H1 (cell line): ENCODE measurements at regions of chr14 and their contacts with region 1.

Region 1: DNA sequence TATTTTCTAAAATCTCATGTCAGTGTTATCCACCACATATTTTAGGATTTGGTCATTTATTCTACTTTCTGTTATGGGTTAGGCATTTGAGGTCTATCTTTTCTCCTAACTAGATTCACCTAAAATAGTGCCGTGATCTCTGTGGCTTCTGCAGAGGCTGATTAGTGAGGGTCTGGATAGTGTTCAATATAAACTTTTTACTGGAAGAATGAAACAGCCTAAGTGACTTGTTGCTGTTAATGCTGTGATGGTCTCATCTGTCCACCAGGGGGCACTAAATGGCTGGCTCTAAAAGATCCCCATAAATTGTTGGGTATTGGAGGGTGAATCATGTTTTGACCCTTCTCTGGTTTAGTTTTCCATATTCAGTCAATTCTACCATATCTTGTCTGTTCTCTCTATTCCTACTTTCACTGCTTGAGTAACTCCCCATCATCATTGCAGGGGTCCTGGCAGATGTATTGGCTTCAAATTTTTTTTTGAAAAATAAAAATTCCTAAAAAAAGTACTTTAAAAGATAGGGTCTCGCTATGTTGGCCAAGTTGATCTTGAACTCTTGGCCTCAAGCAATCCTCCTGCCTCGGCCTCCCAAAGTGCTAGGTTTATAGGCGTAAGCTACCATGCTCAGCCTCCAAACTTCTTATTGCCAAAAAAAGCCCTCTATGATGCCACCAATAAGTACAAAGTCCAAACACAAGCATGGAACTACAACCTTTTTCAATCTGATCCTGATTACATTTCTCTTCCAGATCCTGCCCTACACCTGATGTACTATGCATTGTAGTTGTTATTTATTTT is 6.9 kb downstream of the PABPN1 start:
- DNase-seq: peak in 1 of 2 experiments; percentile 69
- H3K4me3 ChIP-seq: no peak overlapping the region
- H3K27ac ChIP-seq: no peak overlapping the region
- H3K4me1 ChIP-seq: no peaks in the 10 kb centered on the region
- H3K27me3 ChIP-seq: no peaks in the 10 kb centered on the region
- CTCF ChIP-seq: peak in 2 of 3 experiments; percentile 82 to 89; a peak in 3 of 4 replicates
- EP300 ChIP-seq: no peak
- POLR2A ChIP-seq: no peak; a peak in 1 of 3 replicates
- RAD21 ChIP-seq: peak; percentile 90 to 91

Region 2: GRCh38 chr14:22715186-22715812 is 612.8 kb before region 1 on chr14:
- CTCF ChIA-PET with region 1: no interaction called
- POLR2A ChIA-PET with region 1: no interaction called
- DNase-seq: peak in 1 of 2 experiments; percentile 49
- H3K4me3 ChIP-seq: no peak overlapping the region
- H3K27ac ChIP-seq: no peak overlapping the region
- H3K4me1 ChIP-seq: no peaks in the 10 kb centered on the region
- H3K27me3 ChIP-seq: no peaks in the 10 kb centered on the region
- CTCF ChIP-seq: no peak
- EP300 ChIP-seq: no peak
- POLR2A ChIP-seq: no peak
- RAD21 ChIP-seq: no peak

Region 3: DNA sequence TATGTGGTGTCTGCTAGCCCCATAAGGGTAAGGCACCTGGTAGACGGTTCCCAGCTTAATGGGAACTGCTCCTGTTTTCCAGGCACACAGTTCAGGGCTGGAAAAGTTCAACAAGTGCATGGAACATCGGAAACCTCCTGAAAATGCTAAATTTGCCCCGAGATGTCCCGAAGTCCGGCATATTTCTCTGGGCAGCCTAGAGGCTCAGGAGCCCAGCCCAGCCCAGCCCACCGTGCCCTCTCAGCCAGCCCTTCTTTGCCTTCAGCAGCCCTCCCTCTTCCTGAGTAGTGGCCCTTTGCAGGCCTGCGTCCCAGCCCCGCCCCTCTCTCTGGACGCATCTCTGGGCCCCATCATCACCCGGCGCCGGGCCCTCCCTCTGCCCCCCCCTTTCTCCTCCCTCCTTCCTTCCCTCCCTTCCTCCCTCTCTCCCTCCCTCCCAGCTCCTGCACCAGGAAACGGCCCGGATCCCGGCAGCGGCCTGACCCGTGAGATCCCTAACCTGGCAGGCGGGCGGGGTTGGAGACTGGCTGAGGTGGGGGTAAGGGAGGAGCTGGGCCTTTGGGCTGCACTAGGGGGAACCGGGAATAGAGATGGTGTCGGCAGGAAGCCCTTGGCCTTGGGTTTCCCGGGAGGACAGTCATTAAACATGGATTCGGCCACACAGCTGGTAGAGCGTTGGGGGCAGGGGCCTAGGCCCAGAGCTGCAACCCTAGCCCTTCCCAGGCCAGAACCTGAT is 21.6 kb before region 1 on chr14 and contains the start of gene BCL2L2:
- CTCF ChIA-PET with region 1: interaction called, 26 read pairs
- POLR2A ChIA-PET with region 1: interaction called, 48 read pairs
- DNase-seq: peak; percentile 70 to 90
- H3K4me3 ChIP-seq: peak within 1 kb of the TSS; percentile 57 to 90 (median 83)
- H3K27ac ChIP-seq: peak within 1 kb of the TSS; percentile 83; the same call in 1 of the 2 replicates
- H3K4me1 ChIP-seq: peaks cover 0 to 3% (median 1%) of the 10 kb centered on the region in 4 experiments; a peak in 4 of 7 replicates
- H3K27me3 ChIP-seq: peaks cover 0 to 12% (median 5%) of the 10 kb centered on the region in 4 experiments; a peak in 4 of 7 replicates
- CTCF ChIP-seq: no peak
- EP300 ChIP-seq: peak in 1 of 2 experiments; percentile 79; a peak in 1 of 3 replicates
- POLR2A ChIP-seq: peak; percentile 85 to 91
- RAD21 ChIP-seq: 0 out of 4 replicates have a peak, but pooled peaks of 1 of the 2 experiments have one; percentile 9
- total RNA-seq, gene BCL2L2: 13.3 and 13.8 TPM in 2 replicates

Region 4: DNA sequence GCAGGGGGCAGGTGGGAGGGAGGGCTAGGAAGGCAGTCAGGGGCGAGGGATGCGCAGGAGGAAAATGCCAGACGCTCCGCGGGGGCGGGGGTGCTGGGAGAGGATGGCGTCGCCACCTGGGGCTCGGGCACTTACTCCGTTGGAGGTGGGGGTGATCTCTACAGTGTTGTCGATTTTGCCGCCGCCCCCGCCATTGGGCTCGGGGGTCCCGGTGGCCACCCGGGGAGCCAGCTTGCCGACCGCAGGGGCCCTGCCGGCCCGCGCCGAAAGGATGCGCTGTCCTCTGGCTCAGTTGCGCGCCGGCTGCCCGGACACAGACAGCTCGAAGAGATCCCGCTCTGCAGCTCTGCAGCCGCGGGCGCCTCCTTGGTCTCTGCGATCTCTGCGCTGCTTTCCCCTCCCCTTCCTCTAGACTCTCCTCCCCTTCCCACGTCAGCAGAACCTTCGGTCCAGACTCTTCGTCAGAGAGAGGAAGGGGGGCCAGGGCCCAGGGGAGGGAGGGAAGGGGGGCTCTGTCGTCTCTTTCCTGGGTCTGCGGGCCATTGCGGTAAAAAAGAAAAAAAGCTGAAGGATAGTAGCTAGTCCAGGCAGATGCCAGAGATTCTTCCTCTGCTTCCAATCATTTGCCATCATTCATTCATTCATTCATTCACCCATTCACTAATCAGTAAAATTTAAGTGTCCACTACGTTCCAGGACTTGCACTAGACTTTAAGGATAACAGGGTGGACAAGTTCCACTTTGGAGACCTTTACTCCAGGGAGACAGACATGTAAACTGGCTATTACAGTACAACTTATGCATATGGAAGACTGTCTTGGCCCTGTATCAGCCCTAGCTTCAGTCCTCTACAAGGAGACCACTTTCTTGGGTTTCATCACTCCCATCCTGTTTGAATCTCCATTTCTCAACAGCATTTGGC is 24.6 kb after region 1 on chr14 and contains the start of gene SLC22A17:
- CTCF ChIA-PET with region 1: interaction called, 31 read pairs
- POLR2A ChIA-PET with region 1: interaction called, 25 read pairs
- DNase-seq: peak in 1 of 2 experiments; percentile 86
- H3K4me3 ChIP-seq: peak within 1 kb of the TSS; percentile 37 to 84 (median 73)
- H3K27ac ChIP-seq: 0 out of 2 replicates have a peak within 1 kb of the TSS, but pooled peaks have one; percentile 8
- H3K4me1 ChIP-seq: peaks cover 0 to 3% (median 2%) of the 10 kb centered on the region in 4 experiments; a peak in 4 of 7 replicates
- H3K27me3 ChIP-seq: peaks cover 0 to 14% (median 10%) of the 10 kb centered on the region in 4 experiments; a peak in 6 of 7 replicates
- CTCF ChIP-seq: peak in 2 of 3 experiments; percentile 11 to 22; a peak in 2 of 4 replicates
- EP300 ChIP-seq: no peak
- POLR2A ChIP-seq: peak; percentile 36 to 91
- RAD21 ChIP-seq: peak in 1 of 2 experiments; percentile 16; a peak in 1 of 4 replicates
- total RNA-seq, gene SLC22A17: 39.4 and 43.0 TPM in 2 replicates

Region 5: DNA sequence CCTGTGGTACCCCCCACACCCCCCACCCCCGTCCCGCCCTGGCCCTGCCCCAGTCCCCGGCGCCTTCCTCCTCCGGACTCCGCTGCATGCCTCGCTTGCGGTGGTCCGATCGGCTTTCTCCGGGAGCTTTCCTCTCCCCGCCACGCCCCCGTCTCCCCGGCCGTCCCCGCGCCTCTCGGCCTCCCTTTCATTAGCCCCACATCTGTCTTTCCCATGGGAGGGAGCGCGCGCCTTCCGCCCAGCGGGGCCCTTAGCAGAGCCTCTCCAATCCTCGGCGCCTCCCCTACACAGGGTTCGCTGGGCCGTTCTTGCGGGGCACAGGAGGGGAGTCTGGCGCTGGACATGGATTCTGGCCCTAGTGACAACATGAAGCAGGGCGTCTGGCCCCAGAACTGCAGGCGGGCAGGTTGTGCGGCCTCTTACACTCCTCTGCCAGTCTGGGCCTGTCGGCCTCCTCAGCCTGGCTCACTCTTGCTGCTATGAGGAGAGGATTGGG is 38.3 kb after region 1 on chr14:
- CTCF ChIA-PET with region 1: interaction called, 78 read pairs
- POLR2A ChIA-PET with region 1: interaction called, 15 read pairs
- DNase-seq: peak in 1 of 2 experiments; percentile 92
- H3K4me3 ChIP-seq: peak overlapping the region; percentile 47 to 79 (median 77)
- H3K27ac ChIP-seq: peak overlapping the region; percentile 65; the same call in 1 of the 2 replicates
- H3K4me1 ChIP-seq: peaks cover 2 to 22% (median 14%) of the 10 kb centered on the region in 4 experiments; a peak in 6 of 7 replicates
- H3K27me3 ChIP-seq: peaks cover 0 to 12% (median 10%) of the 10 kb centered on the region in 4 experiments; a peak in 5 of 7 replicates
- CTCF ChIP-seq: no peak
- EP300 ChIP-seq: no peak
- POLR2A ChIP-seq: no peak
- RAD21 ChIP-seq: no peak

Region 6: GRCh38 chr14:23454445-23454856 is 126.3 kb after region 1 on chr14:
- CTCF ChIA-PET with region 1: interaction called, 15 read pairs
- POLR2A ChIA-PET with region 1: interaction called, 4 read pairs
- DNase-seq: no peak
- H3K4me3 ChIP-seq: no peak overlapping the region
- H3K27ac ChIP-seq: no peak overlapping the region
- H3K4me1 ChIP-seq: peaks cover 0 to 2% (median 0%) of the 10 kb centered on the region in 4 experiments; a peak in 1 of 7 replicates
- H3K27me3 ChIP-seq: no peaks in the 10 kb centered on the region
- CTCF ChIP-seq: no peak
- EP300 ChIP-seq: no peak
- POLR2A ChIP-seq: no peak
- RAD21 ChIP-seq: no peak

Region 7: GRCh38 chr14:23528555-23528954 is 200.4 kb after region 1 on chr14:
- CTCF ChIA-PET with region 1: no interaction called
- POLR2A ChIA-PET with region 1: no interaction called
- DNase-seq: no peak
- H3K4me3 ChIP-seq: no peak overlapping the region
- H3K27ac ChIP-seq: no peak overlapping the region
- H3K4me1 ChIP-seq: peaks cover 0 to 3% (median 1%) of the 10 kb centered on the region in 4 experiments; a peak in 3 of 7 replicates
- H3K27me3 ChIP-seq: no peaks in the 10 kb centered on the region
- CTCF ChIP-seq: peak; percentile 38 to 50 (median 48)
- EP300 ChIP-seq: no peak
- POLR2A ChIP-seq: no peak
- RAD21 ChIP-seq: peak; percentile 34 to 50; a peak in 3 of 4 replicates